Activated B cell treated with CpG ODN at 0.5 μM for 24 hours (primary cell): ENCODE measurements at regions of chr12 and their contacts with region 1.

Region 1: DNA sequence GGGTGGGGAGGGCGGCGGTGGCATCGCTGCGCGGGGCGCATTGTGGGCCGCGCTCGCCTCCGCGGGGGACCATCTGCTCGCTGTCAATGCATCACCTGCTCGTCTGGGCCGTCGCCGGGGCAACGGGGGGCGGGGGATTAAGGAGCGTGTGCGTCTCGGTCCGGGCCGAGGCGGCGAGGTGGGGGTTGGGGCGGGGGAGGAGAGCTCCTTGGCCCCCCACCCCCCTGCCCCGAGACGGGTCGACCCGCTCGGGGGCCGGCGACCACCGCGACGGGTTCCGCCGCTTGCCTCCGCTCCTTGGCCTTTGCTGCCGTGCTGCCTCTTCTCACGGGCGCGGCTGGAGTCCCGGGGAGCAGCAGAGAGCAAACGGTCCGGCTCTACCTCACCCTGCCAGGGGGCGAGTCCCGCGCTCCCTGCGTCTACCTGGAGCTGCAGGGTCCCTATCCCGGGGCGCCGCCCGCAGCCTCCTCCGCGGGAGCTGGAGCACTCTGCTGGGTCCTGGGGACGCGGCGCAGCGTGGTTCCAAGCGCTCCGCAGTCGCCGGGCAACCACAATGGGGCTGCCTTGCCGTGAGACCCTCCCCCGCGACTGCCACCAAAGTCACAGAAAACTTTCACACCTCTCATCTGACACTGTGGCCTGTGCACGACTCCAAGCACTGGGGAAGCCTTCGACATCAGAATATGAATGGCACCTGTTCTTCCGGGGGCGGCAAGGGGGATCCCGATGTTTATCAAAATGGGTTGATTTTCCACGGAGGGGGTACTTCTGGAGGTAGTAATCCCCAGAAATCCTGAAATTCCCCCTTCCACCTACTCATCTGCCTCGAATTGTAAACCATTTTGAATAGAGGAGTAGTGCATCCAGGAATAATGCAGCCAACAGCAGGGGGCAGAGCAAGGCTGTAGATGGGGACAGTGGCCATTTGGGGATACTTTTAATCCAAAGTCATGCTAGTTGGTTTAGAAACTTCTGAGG is at the start of gene C12orf42:
- DNase-seq: peak; percentile 80
- ATAC-seq: peak; percentile 86
- H3K4me3 Mint-ChIP-seq: peak within 1 kb of the TSS; percentile 84
- H3K27ac Mint-ChIP-seq: peak within 1 kb of the TSS; percentile 77
- H3K4me1 Mint-ChIP-seq: peaks cover 45% of the 10 kb centered on the region
- H3K27me3 Mint-ChIP-seq: no peaks in the 10 kb centered on the region
- CTCF ChIP-seq: no peak
- total RNA-seq, gene C12orf42: 15.0 and 21.0 TPM in 2 replicates

Region 2: DNA sequence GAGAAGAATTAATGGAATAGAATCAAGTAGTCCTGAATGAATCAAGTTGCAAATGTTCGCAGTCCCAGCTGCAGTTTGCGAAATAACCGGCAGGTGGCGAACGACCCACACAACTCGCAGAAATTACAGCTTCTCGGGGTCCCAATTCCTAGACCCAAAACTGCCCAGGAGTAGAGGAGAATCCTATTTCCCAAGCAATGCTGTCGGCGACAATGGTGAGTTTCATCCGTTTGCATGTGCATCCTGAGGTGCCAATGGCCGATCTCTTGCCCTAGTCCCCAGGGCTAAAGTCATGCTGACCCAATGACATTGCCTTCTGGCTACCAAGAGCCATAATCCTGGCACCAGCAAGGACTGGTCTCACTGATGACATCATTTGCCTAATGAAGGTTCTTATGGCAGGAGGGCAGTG is 546.8 kb before region 1 on chr12:
- CTCF ChIA-PET with region 1: interaction called, 5 read pairs
- POLR2A ChIA-PET with region 1: no interaction called
- intact Hi-C with region 1: loop called (anchors 2 kb)
- DNase-seq: peak; percentile 51
- ATAC-seq: peak; percentile 25
- H3K4me3 Mint-ChIP-seq: no peak overlapping the region
- H3K27ac Mint-ChIP-seq: no peak overlapping the region
- H3K4me1 Mint-ChIP-seq: peaks cover 13% of the 10 kb centered on the region
- H3K27me3 Mint-ChIP-seq: peaks cover 54% of the 10 kb centered on the region
- CTCF ChIP-seq: peak; percentile 100

Region 3: GRCh38 chr12:103197725-103198388 is 297.9 kb before region 1 on chr12:
- CTCF ChIA-PET with region 1: no interaction called
- POLR2A ChIA-PET with region 1: no interaction called
- intact Hi-C with region 1: no loop called
- DNase-seq: no peak
- ATAC-seq: no peak
- H3K4me3 Mint-ChIP-seq: no peak overlapping the region
- H3K27ac Mint-ChIP-seq: no peak overlapping the region
- H3K4me1 Mint-ChIP-seq: no peaks in the 10 kb centered on the region
- H3K27me3 Mint-ChIP-seq: no peaks in the 10 kb centered on the region
- CTCF ChIP-seq: no peak

Region 4: GRCh38 chr12:103441437-103442181 is 54.2 kb before region 1 on chr12:
- CTCF ChIA-PET with region 1: interaction called, 5 read pairs
- POLR2A ChIA-PET with region 1: interaction called, 36 read pairs
- intact Hi-C with region 1: loop called (anchors 1 kb)
- DNase-seq: peak; percentile 39
- ATAC-seq: peak; percentile 92
- H3K4me3 Mint-ChIP-seq: peak overlapping the region; percentile 91
- H3K27ac Mint-ChIP-seq: peak overlapping the region; percentile 98
- H3K4me1 Mint-ChIP-seq: peaks cover 46% of the 10 kb centered on the region
- H3K27me3 Mint-ChIP-seq: no peaks in the 10 kb centered on the region
- CTCF ChIP-seq: no peak

Region 5: GRCh38 chr12:103462675-103463074 is 33.1 kb before region 1 on chr12:
- CTCF ChIA-PET with region 1: no interaction called
- POLR2A ChIA-PET with region 1: interaction called, 8 read pairs
- intact Hi-C with region 1: loop called (anchors 2 kb)
- DNase-seq: no peak
- ATAC-seq: peak; percentile 92
- H3K4me3 Mint-ChIP-seq: no peak overlapping the region
- H3K27ac Mint-ChIP-seq: peak overlapping the region; percentile 7
- H3K4me1 Mint-ChIP-seq: peaks cover 32% of the 10 kb centered on the region
- H3K27me3 Mint-ChIP-seq: no peaks in the 10 kb centered on the region
- CTCF ChIP-seq: no peak

Region 6: DNA sequence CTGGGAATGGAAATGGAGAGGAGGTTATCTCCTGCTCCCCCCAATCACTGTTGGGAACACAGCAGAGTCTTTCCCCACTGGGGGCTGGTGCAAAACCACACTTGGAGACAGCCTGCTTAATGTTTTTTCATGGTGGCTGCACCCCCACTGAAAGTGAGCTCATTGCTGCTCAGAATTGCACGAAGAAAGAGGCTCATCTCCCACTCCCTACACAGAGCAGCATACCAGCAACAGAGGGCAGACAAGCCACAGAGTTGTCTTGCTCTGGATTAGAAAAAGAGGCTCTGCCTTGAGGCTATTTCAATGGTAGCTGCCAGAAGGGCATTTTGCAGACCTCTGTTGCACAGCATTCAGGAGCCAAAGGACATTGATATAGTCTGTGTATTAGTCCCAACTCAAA is 68.5 kb after region 1 on chr12:
- CTCF ChIA-PET with region 1: no interaction called
- POLR2A ChIA-PET with region 1: no interaction called
- intact Hi-C with region 1: no loop called
- DNase-seq: no peak
- ATAC-seq: no peak
- H3K4me3 Mint-ChIP-seq: no peak overlapping the region
- H3K27ac Mint-ChIP-seq: no peak overlapping the region
- H3K4me1 Mint-ChIP-seq: no peaks in the 10 kb centered on the region
- H3K27me3 Mint-ChIP-seq: peaks cover 38% of the 10 kb centered on the region
- CTCF ChIP-seq: no peak